Activated T-helper 1 cell treated with anti-CD3 and anti-CD28 coated beads, Interleukin-12 subunit alpha, Interleukin-12 subunit beta, Interleukin-2, Interleukin-4 antibody, amounts not matched to agents 30 ng/mL and 10 ng/mL and 1 ng/mL, durations not matched to agents 14 hours and 24 hours and 36 hours (primary cell): ENCODE measurements at regions of chr3 and their contacts with region 1.

Region 1: DNA sequence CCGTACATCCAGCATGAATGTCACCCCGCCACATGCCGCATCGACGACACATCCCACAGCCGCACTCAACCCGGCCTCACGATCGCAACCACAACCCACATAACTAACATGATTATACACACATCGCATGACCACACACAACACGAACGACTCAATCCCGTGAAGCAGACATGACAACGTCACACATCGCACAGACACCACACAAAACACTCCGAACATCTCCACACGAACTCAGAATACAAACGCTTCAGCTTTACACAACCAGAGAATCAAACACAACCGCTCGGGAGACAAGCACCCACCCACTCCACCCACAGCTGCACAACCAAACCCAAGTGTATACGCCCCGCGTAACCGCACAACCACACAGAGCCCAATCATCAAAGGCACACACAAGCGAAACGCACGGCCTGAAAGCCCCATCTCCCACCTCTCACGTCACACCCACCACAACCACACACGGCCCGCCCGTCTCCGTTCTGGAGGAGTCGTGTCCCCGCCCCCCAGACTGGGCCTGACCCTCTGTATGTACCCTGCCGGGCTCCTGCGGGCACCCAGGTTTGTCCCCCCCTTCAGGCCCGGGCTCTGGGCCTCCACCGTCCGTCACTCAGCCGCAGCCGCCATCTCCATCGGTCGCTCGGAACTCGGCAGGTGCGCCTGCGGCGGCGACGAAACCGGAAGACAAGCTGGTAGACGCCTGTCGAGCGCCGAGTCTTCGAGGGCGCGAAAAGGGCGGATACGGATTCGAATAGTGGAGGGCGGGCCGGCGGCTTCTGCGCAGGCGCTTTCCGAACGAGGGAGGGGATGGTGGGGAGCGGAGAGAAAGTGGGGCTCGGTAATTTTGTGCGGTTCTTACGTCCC is at the start of gene RBSN:
- DNase-seq: peak; percentile 95
- H3K4me3 Mint-ChIP-seq: peak within 1 kb of the TSS; percentile 92
- H3K27ac Mint-ChIP-seq: peak within 1 kb of the TSS; percentile 98
- H3K4me1 Mint-ChIP-seq: peaks cover 22% of the 10 kb centered on the region
- H3K27me3 Mint-ChIP-seq: peaks cover 2% of the 10 kb centered on the region
- total RNA-seq, gene RBSN: 11.7 and 12.5 TPM in 2 replicates

Region 2: GRCh38 chr3:14651440-14652251 is 447.1 kb before region 1 on chr3 and contains the start of gene CCDC174:
- intact Hi-C with region 1: loop called (anchors 1 kb)
- DNase-seq: peak; percentile 94
- H3K4me3 Mint-ChIP-seq: peak within 1 kb of the TSS; percentile 99
- H3K27ac Mint-ChIP-seq: peak within 1 kb of the TSS; percentile 90
- H3K4me1 Mint-ChIP-seq: peaks cover 38% of the 10 kb centered on the region
- H3K27me3 Mint-ChIP-seq: peaks cover 4% of the 10 kb centered on the region
- total RNA-seq, gene CCDC174: 16.6 and 21.7 TPM in 2 replicates

Region 3: DNA sequence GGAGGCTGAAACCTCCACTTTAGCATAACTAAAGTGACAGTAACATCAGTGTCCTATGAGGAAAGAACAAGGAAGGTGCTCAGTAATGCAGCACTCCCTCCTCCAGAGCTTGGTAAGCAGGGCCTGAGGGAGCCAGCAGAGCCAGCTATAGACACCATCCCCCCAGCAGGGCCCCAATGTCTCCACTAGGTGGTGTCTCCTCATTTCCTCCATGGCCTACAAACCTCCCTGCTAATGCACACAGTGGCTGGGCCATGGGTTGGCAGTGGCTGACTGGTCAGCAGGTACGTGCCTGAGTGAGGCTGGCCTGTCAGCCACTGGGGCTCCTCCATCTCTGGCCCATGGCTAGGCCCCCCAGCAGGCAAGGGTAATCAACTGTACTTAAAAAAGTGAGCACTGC is 47.2 kb before region 1 on chr3:
- intact Hi-C with region 1: loop called (anchors 1 kb)
- DNase-seq: peak; percentile 17
- H3K4me3 Mint-ChIP-seq: no peak overlapping the region
- H3K27ac Mint-ChIP-seq: no peak overlapping the region
- H3K4me1 Mint-ChIP-seq: peaks cover 16% of the 10 kb centered on the region
- H3K27me3 Mint-ChIP-seq: no peaks in the 10 kb centered on the region

Region 4: DNA sequence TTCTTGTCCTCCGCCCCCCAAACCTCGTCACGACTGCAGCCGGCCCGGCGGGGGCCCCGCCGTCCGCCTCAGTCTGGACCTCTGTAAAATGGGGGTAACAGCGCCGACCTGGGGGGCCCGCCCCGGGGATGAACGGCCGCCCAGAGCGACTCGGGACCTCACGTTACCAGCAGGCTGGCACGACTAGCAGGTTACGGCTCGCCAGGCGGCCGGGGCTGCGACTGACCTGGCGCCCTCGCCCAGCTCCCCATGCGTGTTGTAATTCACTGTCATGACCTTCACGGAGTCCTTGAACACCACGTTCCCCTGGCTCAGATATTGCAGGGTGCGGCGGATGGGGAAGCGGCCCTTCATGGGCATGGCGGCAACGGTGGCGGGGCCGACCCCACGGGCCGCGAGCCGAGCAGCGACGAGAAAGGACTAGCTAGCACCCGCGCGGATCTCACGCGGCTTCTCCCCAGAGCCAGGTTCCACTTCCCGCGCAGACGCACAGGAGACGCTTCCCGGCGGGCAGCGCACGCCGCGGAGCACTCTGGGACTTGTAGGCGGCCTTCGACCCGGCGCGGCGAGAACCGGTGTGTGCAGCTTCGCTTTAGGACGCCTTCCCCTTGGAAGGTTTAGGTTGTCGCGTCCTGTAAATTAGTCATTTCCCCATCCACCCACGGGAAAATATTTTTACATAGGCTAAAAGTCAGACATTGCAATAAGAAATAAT is 33.7 kb before region 1 on chr3 and contains the start of gene MRPS25:
- intact Hi-C with region 1: loop called (anchors 1 kb)
- DNase-seq: peak; percentile 90
- H3K4me3 Mint-ChIP-seq: peak within 1 kb of the TSS; percentile 96
- H3K27ac Mint-ChIP-seq: peak within 1 kb of the TSS; percentile 95
- H3K4me1 Mint-ChIP-seq: peaks cover 20% of the 10 kb centered on the region
- H3K27me3 Mint-ChIP-seq: no peaks in the 10 kb centered on the region
- total RNA-seq, gene MRPS25: 96.5 and 105 TPM in 2 replicates

Region 5: GRCh38 chr3:15122398-15122797 is 23.7 kb after region 1 on chr3:
- intact Hi-C with region 1: no loop called
- DNase-seq: no peak
- H3K4me3 Mint-ChIP-seq: no peak overlapping the region
- H3K27ac Mint-ChIP-seq: no peak overlapping the region
- H3K4me1 Mint-ChIP-seq: peaks cover 5% of the 10 kb centered on the region
- H3K27me3 Mint-ChIP-seq: peaks cover 2% of the 10 kb centered on the region

Region 6: DNA sequence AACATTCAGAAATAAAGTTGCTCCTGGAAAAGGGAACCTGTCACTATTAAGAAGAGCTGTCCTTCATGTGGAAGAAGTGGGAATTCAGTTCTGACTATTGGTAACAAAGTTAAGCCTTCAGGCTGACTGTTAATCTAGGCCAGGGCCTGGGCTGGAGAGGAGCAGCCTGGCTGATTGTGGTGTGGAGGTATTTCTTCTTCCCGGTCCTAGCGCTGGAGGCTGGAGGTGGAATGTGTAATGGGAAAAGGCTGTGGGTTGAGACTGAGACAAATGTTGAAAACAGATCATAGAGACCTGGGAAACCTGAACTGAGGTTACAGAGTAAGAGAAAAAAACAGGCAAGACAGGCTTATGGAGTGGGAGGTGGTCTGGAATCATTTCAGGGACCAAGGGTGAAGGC is 257.5 kb after region 1 on chr3:
- intact Hi-C with region 1: loop called (anchors 2 kb)
- DNase-seq: no peak
- H3K4me3 Mint-ChIP-seq: no peak overlapping the region
- H3K27ac Mint-ChIP-seq: peak overlapping the region; percentile 93
- H3K4me1 Mint-ChIP-seq: peaks cover 43% of the 10 kb centered on the region
- H3K27me3 Mint-ChIP-seq: no peaks in the 10 kb centered on the region

Region 7: GRCh38 chr3:15427182-15427880 is 328.6 kb after region 1 on chr3 and contains the starts of genes EAF1 and METTL6:
- intact Hi-C with region 1: loop called (anchors 1 kb)
- DNase-seq: peak; percentile 81
- H3K4me3 Mint-ChIP-seq: peak within 1 kb of the TSS; percentile 97
- H3K27ac Mint-ChIP-seq: peak within 1 kb of the TSS; percentile 96
- H3K4me1 Mint-ChIP-seq: peaks cover 61% of the 10 kb centered on the region
- H3K27me3 Mint-ChIP-seq: no peaks in the 10 kb centered on the region
- total RNA-seq, gene EAF1: 27.3 and 27.8 TPM in 2 replicates
- total RNA-seq, gene METTL6: 15.0 and 15.8 TPM in 2 replicates

Region 8: GRCh38 chr3:15553749-15554148 is 455.0 kb after region 1 on chr3:
- intact Hi-C with region 1: no loop called
- DNase-seq: no peak
- H3K4me3 Mint-ChIP-seq: no peak overlapping the region
- H3K27ac Mint-ChIP-seq: no peak overlapping the region
- H3K4me1 Mint-ChIP-seq: peaks cover 32% of the 10 kb centered on the region
- H3K27me3 Mint-ChIP-seq: no peaks in the 10 kb centered on the region

Region 9: GRCh38 chr3:15859507-15860013 is 760.8 kb after region 1 on chr3:
- intact Hi-C with region 1: loop called (anchors 10 kb)
- DNase-seq: peak; percentile 78
- H3K4me3 Mint-ChIP-seq: peak overlapping the region; percentile 92
- H3K27ac Mint-ChIP-seq: peak overlapping the region; percentile 91
- H3K4me1 Mint-ChIP-seq: peaks cover 33% of the 10 kb centered on the region
- H3K27me3 Mint-ChIP-seq: peaks cover 3% of the 10 kb centered on the region